ENCODE measurements at regions of chr19 and their contacts with region 1.

Region 1: DNA sequence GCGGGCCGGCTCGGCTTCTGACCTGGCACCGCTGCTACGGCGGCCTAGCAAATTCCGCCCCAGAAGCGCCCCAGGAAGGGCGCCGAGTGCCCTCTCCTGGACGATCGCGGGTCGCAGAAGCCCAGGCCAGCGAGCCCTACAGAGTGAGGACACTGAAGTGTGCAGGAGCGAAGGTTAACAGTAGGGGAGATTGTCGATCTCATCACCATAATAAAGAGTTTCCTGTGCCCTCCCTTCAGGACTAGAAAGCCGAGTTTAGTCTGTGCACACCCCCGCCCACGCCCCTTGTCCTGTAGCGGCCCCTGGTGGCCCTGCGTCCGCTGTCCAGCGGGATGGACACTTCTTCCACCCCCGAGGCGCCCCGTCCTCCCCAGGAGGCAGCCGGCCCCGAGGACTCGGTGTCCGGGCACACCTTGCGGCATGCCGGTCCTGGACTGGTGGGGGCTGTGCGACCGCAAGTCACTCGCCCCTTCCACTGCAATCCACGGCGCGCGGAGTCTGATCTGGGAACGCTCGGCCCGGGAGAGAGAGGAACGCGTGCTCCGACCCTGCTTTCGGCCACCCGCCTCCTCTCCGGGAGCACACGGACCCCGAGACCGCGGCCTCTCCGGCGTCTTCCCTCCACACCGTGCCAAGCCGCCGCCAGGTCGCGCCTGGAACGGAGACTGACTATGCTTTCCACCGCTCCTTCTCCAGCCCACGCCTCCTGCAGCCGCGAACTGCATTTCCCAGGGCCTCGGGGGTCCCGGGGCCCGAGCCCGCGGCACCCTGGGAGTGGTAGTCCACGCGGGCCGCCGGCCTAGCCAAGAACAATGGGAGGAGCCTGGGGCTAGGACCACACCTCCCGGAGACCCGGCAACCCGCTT is 769 bp upstream of the KMT2B start:
- DNase-seq: peak; percentile 89 to 98
- ATAC-seq: peak; percentile 83 to 93 (median 86)
- H3K4me3 ChIP-seq: peak overlapping the region; percentile 86
- H3K4me3 Mint-ChIP-seq: peak overlapping the region; percentile 99
- H3K27ac ChIP-seq: peak overlapping the region; percentile 79
- H3K27ac Mint-ChIP-seq: peak overlapping the region; percentile 94 to 98
- H3K4me1 ChIP-seq: peaks cover 48% of the 10 kb centered on the region
- H3K4me1 Mint-ChIP-seq: peaks cover 16 to 57% of the 10 kb centered on the region in 2 donors
- H3K27me3 ChIP-seq: no peaks in the 10 kb centered on the region
- H3K27me3 Mint-ChIP-seq: no peaks in the 10 kb centered on the region
- CTCF ChIP-seq: peak; percentile 95

Region 2: DNA sequence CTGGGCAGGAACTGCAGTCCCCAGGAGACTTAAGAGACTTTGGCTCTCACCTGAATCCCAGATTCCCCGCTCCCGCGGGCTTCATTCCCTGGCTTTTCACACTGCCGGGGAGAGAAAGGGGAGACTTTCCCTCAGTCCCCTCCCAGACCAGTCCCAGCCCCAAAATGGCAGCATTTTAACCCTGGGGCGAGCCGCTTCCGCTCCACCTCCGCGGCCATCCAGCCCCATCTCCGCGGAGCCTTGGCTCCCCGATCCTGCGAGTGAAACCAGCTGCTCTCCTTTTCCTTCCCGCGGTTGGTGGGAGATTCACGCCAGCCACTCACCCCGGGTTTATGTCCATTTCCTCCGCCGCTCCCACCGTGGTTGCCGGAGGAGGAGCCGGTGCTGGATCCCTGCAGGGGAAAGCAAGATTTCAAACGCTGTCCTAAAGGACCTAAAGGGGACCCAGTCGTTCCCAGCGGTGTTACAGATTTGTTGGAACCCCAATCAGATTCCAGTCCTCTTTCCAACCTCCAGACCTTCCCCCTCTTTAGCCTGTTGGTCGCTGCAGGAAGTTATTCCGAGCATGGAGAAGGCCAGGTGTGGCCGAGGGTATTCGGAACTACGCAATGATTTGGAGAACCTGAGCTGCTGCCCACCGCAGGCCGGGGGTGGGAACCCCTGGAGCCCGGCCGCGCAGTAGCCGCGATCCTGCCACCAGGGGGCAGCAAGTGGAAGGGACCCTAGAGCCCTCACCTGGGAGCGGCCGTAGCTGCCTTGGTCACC is 207.0 kb before region 1 on chr19:
- intact Hi-C with region 1: loop called (anchors 2 kb)
- DNase-seq: peak; percentile 74 to 85
- ATAC-seq: peak; percentile 71 to 76 (median 75)
- H3K4me3 ChIP-seq: peak overlapping the region; percentile 55
- H3K4me3 Mint-ChIP-seq: peak overlapping the region; percentile 89
- H3K27ac ChIP-seq: peak overlapping the region; percentile 46
- H3K27ac Mint-ChIP-seq: peak overlapping the region; percentile 64 to 82
- H3K4me1 ChIP-seq: peaks cover 23% of the 10 kb centered on the region
- H3K4me1 Mint-ChIP-seq: peaks cover 8 to 24% of the 10 kb centered on the region in 2 donors
- H3K27me3 ChIP-seq: peaks cover 11% of the 10 kb centered on the region
- H3K27me3 Mint-ChIP-seq: peaks cover 7 to 19% of the 10 kb centered on the region in 2 donors
- CTCF ChIP-seq: peak; percentile 98

Region 3: DNA sequence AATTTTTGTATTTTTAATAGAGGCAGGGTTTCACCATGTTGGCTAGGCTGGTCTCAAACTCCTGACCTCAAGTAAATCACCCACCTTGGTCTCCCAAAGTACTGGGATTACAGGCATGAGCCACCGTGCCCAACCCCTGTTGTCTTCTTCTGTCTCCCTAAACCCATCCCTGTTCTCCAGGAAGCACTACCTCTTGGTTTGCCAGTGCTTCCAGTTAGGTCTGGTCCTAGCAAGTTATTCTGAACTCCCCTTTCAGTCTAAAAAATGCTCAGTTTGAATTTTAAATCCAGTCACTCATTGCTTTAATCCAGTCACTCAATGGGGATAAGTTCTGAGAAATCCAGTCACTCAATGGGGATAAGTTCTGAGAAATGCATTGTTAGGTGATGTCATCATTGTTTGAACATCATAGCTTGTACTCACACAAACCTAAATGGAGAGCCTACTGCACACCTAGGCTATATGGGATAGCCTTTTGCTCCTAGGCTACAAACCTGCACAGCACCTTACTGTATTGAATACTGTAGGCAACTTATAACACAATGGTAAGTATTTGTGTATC is 145.5 kb before region 1 on chr19:
- intact Hi-C with region 1: no loop called
- DNase-seq: no peak
- ATAC-seq: no peak
- H3K4me3 ChIP-seq: no peak overlapping the region
- H3K4me3 Mint-ChIP-seq: no peak overlapping the region
- H3K27ac ChIP-seq: no peak overlapping the region
- H3K27ac Mint-ChIP-seq: no peak overlapping the region
- H3K4me1 ChIP-seq: no peaks in the 10 kb centered on the region
- H3K4me1 Mint-ChIP-seq: no peaks in the 10 kb centered on the region
- H3K27me3 ChIP-seq: peaks cover 2% of the 10 kb centered on the region
- H3K27me3 Mint-ChIP-seq: peaks cover 9 to 20% of the 10 kb centered on the region in 2 donors
- CTCF ChIP-seq: no peak

Region 4: GRCh38 chr19:35628565-35629331 is 88.3 kb before region 1 on chr19 and contains the start of gene RBM42:
- intact Hi-C with region 1: loop called (anchors 2 kb)
- DNase-seq: peak; percentile 99
- ATAC-seq: peak; percentile 97 to 100 (median 98)
- H3K4me3 ChIP-seq: peak within 1 kb of the TSS; percentile 86
- H3K4me3 Mint-ChIP-seq: peak within 1 kb of the TSS; percentile 99
- H3K27ac ChIP-seq: peak within 1 kb of the TSS; percentile 89
- H3K27ac Mint-ChIP-seq: peak within 1 kb of the TSS; percentile 96 to 97
- H3K4me1 ChIP-seq: peaks cover 23% of the 10 kb centered on the region
- H3K4me1 Mint-ChIP-seq: peaks cover 26 to 42% of the 10 kb centered on the region in 2 donors
- H3K27me3 ChIP-seq: no peaks in the 10 kb centered on the region
- H3K27me3 Mint-ChIP-seq: no peaks in the 10 kb centered on the region
- CTCF ChIP-seq: no peak
- total RNA-seq, gene RBM42: 51.6 to 61.7 (median 58.2) TPM

Region 5: DNA sequence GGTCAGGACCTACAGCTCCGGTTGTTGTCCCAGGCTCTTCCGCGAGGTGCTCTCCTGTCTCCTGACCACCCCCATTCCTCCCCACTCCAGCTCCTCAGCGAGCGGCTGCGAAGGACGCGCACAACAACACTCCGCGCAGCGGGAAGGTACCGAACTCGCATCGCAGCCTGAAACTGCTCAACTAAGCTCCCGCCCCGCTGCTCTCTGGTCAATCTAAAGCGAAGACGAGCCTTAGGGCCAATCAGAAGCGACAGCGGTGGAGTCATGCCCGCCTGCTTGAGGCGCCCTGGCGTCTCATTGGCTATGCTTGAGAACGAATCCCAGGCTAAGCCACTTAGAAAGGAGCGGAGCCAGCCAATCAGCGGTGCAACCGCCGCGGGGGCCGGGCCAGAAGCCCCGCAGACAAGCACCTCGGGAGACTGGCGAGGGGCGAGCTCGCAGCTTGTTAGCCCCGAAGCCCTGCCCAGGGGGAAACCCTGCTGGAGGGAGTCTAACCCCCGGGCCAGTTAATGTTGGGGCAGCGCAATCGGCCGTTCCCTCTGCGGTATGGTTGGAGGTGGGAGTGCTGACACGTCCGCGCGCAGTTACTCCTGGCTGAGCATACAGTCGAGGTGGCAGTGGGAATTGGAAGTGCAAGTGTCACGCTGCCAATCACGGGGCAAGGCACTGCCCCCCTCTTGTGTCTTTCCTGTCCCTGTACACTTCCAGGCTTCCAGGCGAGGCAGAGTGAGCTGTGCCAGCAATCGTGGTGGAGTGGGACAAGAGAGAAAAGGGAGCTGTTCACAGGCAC is 14.6 kb before region 1 on chr19:
- intact Hi-C with region 1: loop called (anchors 1 kb)
- DNase-seq: peak; percentile 85 to 97
- ATAC-seq: peak; percentile 99
- H3K4me3 ChIP-seq: peak overlapping the region; percentile 46
- H3K4me3 Mint-ChIP-seq: peak overlapping the region; percentile 97
- H3K27ac ChIP-seq: peak overlapping the region; percentile 41
- H3K27ac Mint-ChIP-seq: peak overlapping the region; percentile 82 to 87
- H3K4me1 ChIP-seq: peaks cover 14% of the 10 kb centered on the region
- H3K4me1 Mint-ChIP-seq: peaks cover 8 to 10% of the 10 kb centered on the region in 2 donors
- H3K27me3 ChIP-seq: no peaks in the 10 kb centered on the region
- H3K27me3 Mint-ChIP-seq: peaks cover 4 to 7% of the 10 kb centered on the region in 2 donors
- CTCF ChIP-seq: no peak

Region 6: GRCh38 chr19:35748106-35749020 is 31.3 kb after region 1 on chr19 and contains the start of gene LIN37:
- intact Hi-C with region 1: loop called (anchors 1 kb)
- DNase-seq: peak; percentile 97 to 99
- ATAC-seq: peak; percentile 73 to 90 (median 77)
- H3K4me3 ChIP-seq: peak within 1 kb of the TSS; percentile 91
- H3K4me3 Mint-ChIP-seq: peak within 1 kb of the TSS; percentile 97
- H3K27ac ChIP-seq: peak within 1 kb of the TSS; percentile 84
- H3K27ac Mint-ChIP-seq: peak within 1 kb of the TSS; percentile 92
- H3K4me1 ChIP-seq: peaks cover 46% of the 10 kb centered on the region
- H3K4me1 Mint-ChIP-seq: peaks cover 33 to 47% of the 10 kb centered on the region in 2 donors
- H3K27me3 ChIP-seq: no peaks in the 10 kb centered on the region
- H3K27me3 Mint-ChIP-seq: no peaks in the 10 kb centered on the region
- CTCF ChIP-seq: no peak
- total RNA-seq, gene LIN37: 16.7 to 22.1 (median 18.2) TPM

Region 7: GRCh38 chr19:36113894-36114762 is 397.1 kb after region 1 on chr19:
- intact Hi-C with region 1: no loop called
- DNase-seq: peak in 1 of 2 donors; percentile 43
- ATAC-seq: no peak
- H3K4me3 ChIP-seq: peak overlapping the region; percentile 78
- H3K4me3 Mint-ChIP-seq: peak overlapping the region; percentile 90
- H3K27ac ChIP-seq: peak overlapping the region; percentile 93
- H3K27ac Mint-ChIP-seq: peak overlapping the region; percentile 95 to 99
- H3K4me1 ChIP-seq: peaks cover 29% of the 10 kb centered on the region
- H3K4me1 Mint-ChIP-seq: peaks cover 31 to 51% of the 10 kb centered on the region in 2 donors
- H3K27me3 ChIP-seq: no peaks in the 10 kb centered on the region
- H3K27me3 Mint-ChIP-seq: no peaks in the 10 kb centered on the region
- CTCF ChIP-seq: no peak

Measured in natural killer cell (primary cell).